Heart left ventricle (tissue), 16 donors: ENCODE measurements at regions of chr10 and their contacts with region 1.

Region 1: DNA sequence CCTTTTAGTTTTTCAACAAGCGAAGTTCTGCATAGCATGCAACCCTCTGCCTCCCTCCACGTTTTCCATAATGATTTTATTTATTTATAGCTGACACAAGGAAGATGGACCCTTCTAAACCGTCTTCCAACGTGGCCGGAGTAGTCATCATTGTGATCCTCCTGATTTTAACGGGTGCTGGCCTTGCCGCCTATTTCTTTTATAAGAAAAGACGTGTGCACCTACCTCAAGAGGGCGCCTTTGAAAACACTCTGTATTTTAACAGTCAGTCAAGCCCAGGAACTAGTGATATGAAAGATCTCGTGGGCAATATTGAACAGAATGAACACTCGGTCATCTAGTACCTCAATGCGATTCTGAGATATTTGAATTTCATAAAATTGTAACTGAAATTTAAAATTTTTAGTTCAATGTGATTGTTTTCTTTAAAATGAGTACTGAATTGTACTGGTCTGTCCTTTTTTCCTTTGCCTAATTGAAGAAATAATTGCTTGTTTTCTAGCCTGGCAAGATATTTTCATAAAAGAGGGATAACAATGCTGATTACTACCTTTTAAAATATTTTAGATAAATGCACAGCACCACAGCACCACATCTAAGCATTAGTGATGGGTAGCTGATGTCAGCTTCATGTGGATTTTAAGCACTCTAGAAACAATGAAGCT is 41.5 kb upstream of the SLC39A12 start:
- DNase-seq: peak in 4 of 5 donors; percentile 29 to 47 (median 40)
- ATAC-seq: peak in 2 of 4 donors; percentile 21 to 54
- H3K4me3 ChIP-seq: no peak overlapping the region
- H3K27ac ChIP-seq: no peak overlapping the region
- H3K4me1 ChIP-seq: peaks cover 0 to 24% (median 0%) of the 10 kb centered on the region in 12 donors
- H3K27me3 ChIP-seq: no peaks in the 10 kb centered on the region
- CTCF ChIP-seq: peak; percentile 30 to 65 (median 54)
- POLR2A ChIP-seq: no peak

Region 2: GRCh38 chr10:17820943-17821342 is 89.3 kb before region 1 on chr10:
- intact Hi-C with region 1: no loop called
- DNase-seq: no peak
- ATAC-seq: no peak
- H3K4me3 ChIP-seq: no peak overlapping the region
- H3K27ac ChIP-seq: peak overlapping the region in 1 of 12 donors; percentile 48
- H3K4me1 ChIP-seq: peaks cover 0 to 51% (median 0%) of the 10 kb centered on the region in 12 donors
- H3K27me3 ChIP-seq: no peaks in the 10 kb centered on the region
- CTCF ChIP-seq: no peak
- POLR2A ChIP-seq: no peak

Region 3: DNA sequence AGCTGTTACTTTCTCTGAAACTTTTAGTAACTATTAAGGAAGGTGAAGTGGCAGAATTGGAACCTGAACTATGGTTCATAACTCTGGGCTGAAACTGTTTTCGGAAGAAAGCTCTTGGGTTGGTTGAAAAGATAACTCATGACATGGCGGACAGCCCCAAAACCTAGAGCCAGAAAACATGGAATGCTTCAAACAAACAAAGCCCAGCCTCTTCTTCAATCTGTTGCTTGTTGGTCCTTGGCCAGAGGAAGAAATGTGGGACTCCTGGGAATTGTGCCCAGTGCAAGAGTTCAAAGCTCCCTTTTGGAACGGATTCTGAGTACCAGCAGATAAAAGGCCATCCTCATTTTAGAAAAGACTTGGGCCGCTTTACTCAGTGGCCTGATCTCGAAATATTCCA is 177.1 kb after region 1 on chr10:
- intact Hi-C with region 1: loop called in 2 of 10 experiments (anchors 10 kb)
- DNase-seq: peak in 1 of 5 donors; percentile 7
- ATAC-seq: peak in 3 of 4 donors; percentile 36 to 51 (median 45)
- H3K4me3 ChIP-seq: no peak overlapping the region
- H3K27ac ChIP-seq: peak overlapping the region in 2 of 12 donors; percentile 21 to 62
- H3K4me1 ChIP-seq: peaks cover 0 to 7% (median 0%) of the 10 kb centered on the region in 12 donors
- H3K27me3 ChIP-seq: no peaks in the 10 kb centered on the region
- CTCF ChIP-seq: no peak
- POLR2A ChIP-seq: no peak

Region 4: DNA sequence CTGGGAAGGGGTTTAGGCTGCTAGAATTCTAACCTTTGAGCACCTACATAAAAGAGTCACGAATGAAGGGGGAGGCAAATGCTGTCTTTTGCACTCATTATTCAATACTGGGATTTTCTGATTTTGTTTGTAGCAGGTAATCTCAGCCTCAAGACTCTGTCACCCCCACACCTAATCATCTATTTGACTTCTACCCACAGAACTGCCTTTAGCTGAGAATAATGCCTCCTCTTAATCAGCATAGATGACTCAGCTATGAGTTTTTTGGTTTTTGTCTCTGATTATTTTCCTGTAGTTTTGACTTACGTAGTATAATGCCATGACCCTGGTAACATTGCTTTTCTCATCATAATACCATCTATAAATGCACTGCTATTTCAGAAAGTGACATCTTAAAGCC is 187.3 kb after region 1 on chr10:
- intact Hi-C with region 1: loop called in 6 of 10 experiments (anchors 5 to 10 kb)
- DNase-seq: no peak
- ATAC-seq: no peak
- H3K4me3 ChIP-seq: no peak overlapping the region
- H3K27ac ChIP-seq: no peak overlapping the region
- H3K4me1 ChIP-seq: peaks cover 0 to 8% (median 0%) of the 10 kb centered on the region in 12 donors
- H3K27me3 ChIP-seq: no peaks in the 10 kb centered on the region
- CTCF ChIP-seq: no peak
- POLR2A ChIP-seq: no peak

Region 5: DNA sequence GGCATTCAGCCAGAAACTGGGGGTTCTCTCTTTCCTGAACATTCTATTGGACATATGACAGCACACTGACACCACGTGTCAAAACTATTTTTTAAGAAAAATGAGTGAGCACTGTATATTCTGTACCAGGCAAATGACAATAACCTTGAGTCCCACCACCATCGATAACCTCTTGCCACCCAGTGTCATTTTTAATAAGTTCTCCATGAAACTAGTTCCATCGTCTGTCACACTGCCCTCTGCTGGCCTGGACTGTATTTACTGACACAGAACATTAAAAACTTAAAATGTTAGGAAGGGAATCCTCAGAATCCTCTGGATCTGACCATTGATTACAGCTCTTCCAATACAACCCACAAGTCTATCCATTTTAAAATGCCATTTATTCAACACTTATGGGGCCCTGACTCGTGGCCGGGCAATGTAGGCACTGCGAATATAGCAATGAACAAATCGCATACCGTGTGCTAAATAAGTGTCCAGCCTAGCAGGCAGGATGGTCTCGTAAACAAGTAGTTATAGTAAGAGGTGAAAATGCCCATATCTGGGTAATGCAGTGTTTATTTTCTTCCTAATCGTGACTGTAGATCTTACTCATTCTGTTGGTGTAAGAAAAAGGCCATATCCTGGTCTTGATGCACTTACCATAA is 194.1 kb after region 1 on chr10:
- intact Hi-C with region 1: loop called in 6 of 10 experiments (anchors 5 to 10 kb)
- DNase-seq: peak in 4 of 5 donors; percentile 36 to 59 (median 42)
- ATAC-seq: no peak
- H3K4me3 ChIP-seq: no peak overlapping the region
- H3K27ac ChIP-seq: no peak overlapping the region
- H3K4me1 ChIP-seq: no peaks in the 10 kb centered on the region
- H3K27me3 ChIP-seq: no peaks in the 10 kb centered on the region
- CTCF ChIP-seq: peak; percentile 51 to 76 (median 66)
- POLR2A ChIP-seq: no peak

Region 6: GRCh38 chr10:18117276-18117675 is 207.0 kb after region 1 on chr10:
- intact Hi-C with region 1: no loop called
- DNase-seq: no peak
- ATAC-seq: no peak
- H3K4me3 ChIP-seq: no peak overlapping the region
- H3K27ac ChIP-seq: no peak overlapping the region
- H3K4me1 ChIP-seq: no peaks in the 10 kb centered on the region
- H3K27me3 ChIP-seq: no peaks in the 10 kb centered on the region
- CTCF ChIP-seq: no peak
- POLR2A ChIP-seq: no peak

Region 7: GRCh38 chr10:18140149-18140956 is 230.1 kb after region 1 on chr10 and contains the start of gene CACNB2:
- intact Hi-C with region 1: loop called in 1 of 10 experiments (anchors 10 kb)
- DNase-seq: peak; percentile 69 to 86 (median 81)
- ATAC-seq: peak; percentile 48 to 82 (median 76)
- H3K4me3 ChIP-seq: peak within 1 kb of the TSS; percentile 48 to 90 (median 62)
- H3K27ac ChIP-seq: peak within 1 kb of the TSS; percentile 55 to 93 (median 79)
- H3K4me1 ChIP-seq: peaks cover 0 to 18% (median 3%) of the 10 kb centered on the region in 12 donors
- H3K27me3 ChIP-seq: peaks cover 0 to 36% (median 0%) of the 10 kb centered on the region in 9 donors
- CTCF ChIP-seq: peak in 2 of 12 donors; percentile 4 to 24
- POLR2A ChIP-seq: no peak
- total RNA-seq, gene CACNB2: 28.2 to 63.2 (median 35.9) TPM

Region 8: DNA sequence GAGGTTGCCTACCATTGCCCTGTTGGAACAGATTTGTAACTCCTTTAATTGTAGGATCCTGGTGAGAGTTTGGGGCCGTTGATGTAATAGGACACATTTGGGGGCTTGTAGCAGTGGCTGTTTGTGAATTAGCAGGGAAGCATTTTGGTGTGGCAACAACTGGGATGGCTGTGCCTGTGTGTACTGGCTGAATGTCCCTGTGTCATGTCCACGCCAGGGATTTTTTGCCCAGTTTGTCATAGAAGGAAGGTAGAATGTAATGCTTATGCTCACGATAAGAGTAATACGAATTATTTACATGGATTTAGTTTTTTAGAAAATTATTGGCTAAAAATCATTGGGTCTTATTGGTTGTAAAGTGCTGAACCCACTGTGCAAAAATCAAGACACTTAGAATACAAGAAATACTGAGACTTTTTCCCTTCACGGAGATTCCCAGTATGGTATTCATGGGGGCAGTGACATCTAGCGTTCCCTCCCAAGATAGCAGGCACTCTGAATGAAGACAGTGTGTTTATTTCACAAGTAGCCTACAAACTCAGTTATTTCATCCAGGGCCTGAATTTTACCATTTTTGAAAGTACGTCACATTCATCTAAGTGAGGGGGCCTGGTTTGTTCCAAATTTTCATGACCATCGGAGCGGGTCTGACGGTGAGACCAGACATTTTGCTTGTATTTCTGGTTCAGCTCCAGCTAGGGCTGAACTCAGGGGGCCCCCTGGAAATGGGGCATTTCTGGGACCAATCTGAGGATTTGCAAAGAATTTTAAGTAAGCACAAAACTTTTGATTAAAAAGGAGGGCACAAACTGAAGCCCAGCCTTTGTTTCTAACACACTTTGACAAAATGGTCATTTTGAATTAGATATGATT is 304.7 kb after region 1 on chr10:
- intact Hi-C with region 1: loop called in 9 of 10 experiments (anchors 2 to 10 kb)
- DNase-seq: peak in 1 of 5 donors; percentile 29
- ATAC-seq: peak in 3 of 4 donors; percentile 70 to 81 (median 80)
- H3K4me3 ChIP-seq: peak overlapping the region in 1 of 12 donors; percentile 20
- H3K27ac ChIP-seq: peak overlapping the region in 1 of 12 donors; percentile 9
- H3K4me1 ChIP-seq: peaks cover 0 to 25% (median 2%) of the 10 kb centered on the region in 12 donors
- H3K27me3 ChIP-seq: no peaks in the 10 kb centered on the region
- CTCF ChIP-seq: peak; percentile 63 to 90 (median 78)
- POLR2A ChIP-seq: no peak

Region 9: GRCh38 chr10:18303851-18304801 is 393.9 kb after region 1 on chr10:
- intact Hi-C with region 1: loop called in 1 of 10 experiments (anchors 10 kb)
- DNase-seq: peak in 1 of 5 donors; percentile 39
- ATAC-seq: peak in 2 of 4 donors; percentile 37 to 48
- H3K4me3 ChIP-seq: no peak overlapping the region
- H3K27ac ChIP-seq: no peak overlapping the region
- H3K4me1 ChIP-seq: peaks cover 0 to 16% (median 0%) of the 10 kb centered on the region in 12 donors
- H3K27me3 ChIP-seq: no peaks in the 10 kb centered on the region
- CTCF ChIP-seq: no peak
- POLR2A ChIP-seq: no peak